Posterior vena cava (tissue), 2 donors: ENCODE measurements at regions of chr3 and their contacts with region 1.

Region 1: GRCh38 chr3:12590096-12590495 is 33.2 kb downstream of the MKRN2 start:
- DNase-seq: no peak

Region 2: GRCh38 chr3:12097971-12098370 is 492.1 kb before region 1 on chr3:
- intact Hi-C with region 1: no loop called
- DNase-seq: no peak

Region 3: DNA sequence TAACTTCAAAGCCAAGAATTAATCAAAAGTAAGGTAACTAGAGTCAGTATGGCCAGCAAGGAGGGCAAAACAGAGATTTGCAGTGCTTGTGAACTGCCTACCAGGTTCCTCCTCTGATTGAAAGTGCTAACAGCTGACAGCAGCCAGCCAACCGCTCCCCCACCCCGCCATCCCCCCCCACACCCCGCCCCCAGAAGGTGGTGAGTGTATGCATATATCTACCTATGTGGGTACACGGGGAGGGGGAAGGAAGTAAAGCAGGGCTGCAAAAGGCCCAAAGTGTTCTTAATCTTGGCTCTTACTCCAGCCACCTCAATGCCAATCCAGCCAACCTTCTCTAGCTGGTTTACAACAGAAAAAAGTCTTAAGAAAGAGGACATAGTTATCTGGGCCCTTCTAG is 23.2 kb after region 1 on chr3:
- intact Hi-C with region 1: no loop called
- DNase-seq: no peak

Region 4: GRCh38 chr3:12719984-12720898 is 130.1 kb after region 1 on chr3:
- intact Hi-C with region 1: loop called in 1 of 2 experiments (anchors 10 kb)
- DNase-seq: peak; percentile 89